ENCODE measurements at regions of chr12 and their contacts with region 1.

Region 1: GRCh38 chr12:71685914-71686665 is at the start of gene TMEM19:
- DNase-seq: peak; percentile 91
- ATAC-seq: peak; percentile 94
- H3K4me3 ChIP-seq: peak within 1 kb of the TSS; percentile 69
- H3K27ac ChIP-seq: peak within 1 kb of the TSS; percentile 67
- H3K4me1 ChIP-seq: peaks cover 25% of the 10 kb centered on the region
- H3K27me3 ChIP-seq: no peaks in the 10 kb centered on the region
- CTCF ChIP-seq: peak; percentile 43
- total RNA-seq, gene TMEM19: 14.3 and 17.5 TPM in 2 replicates

Region 2: GRCh38 chr12:71663561-71664294 is 22.4 kb before region 1 on chr12 and contains the start of gene ZFC3H1:
- CTCF ChIA-PET with region 1: interaction called, 5 read pairs
- POLR2A ChIA-PET with region 1: interaction called, 8 read pairs
- intact Hi-C with region 1: loop called (anchors 2 kb)
- DNase-seq: peak; percentile 99
- ATAC-seq: peak; percentile 87
- H3K4me3 ChIP-seq: peak within 1 kb of the TSS; percentile 95
- H3K27ac ChIP-seq: peak within 1 kb of the TSS; percentile 87
- H3K4me1 ChIP-seq: peaks cover 18% of the 10 kb centered on the region
- H3K27me3 ChIP-seq: no peaks in the 10 kb centered on the region
- CTCF ChIP-seq: peak; percentile 48
- total RNA-seq, gene ZFC3H1: 13.7 and 18.5 TPM in 2 replicates

Region 3: DNA sequence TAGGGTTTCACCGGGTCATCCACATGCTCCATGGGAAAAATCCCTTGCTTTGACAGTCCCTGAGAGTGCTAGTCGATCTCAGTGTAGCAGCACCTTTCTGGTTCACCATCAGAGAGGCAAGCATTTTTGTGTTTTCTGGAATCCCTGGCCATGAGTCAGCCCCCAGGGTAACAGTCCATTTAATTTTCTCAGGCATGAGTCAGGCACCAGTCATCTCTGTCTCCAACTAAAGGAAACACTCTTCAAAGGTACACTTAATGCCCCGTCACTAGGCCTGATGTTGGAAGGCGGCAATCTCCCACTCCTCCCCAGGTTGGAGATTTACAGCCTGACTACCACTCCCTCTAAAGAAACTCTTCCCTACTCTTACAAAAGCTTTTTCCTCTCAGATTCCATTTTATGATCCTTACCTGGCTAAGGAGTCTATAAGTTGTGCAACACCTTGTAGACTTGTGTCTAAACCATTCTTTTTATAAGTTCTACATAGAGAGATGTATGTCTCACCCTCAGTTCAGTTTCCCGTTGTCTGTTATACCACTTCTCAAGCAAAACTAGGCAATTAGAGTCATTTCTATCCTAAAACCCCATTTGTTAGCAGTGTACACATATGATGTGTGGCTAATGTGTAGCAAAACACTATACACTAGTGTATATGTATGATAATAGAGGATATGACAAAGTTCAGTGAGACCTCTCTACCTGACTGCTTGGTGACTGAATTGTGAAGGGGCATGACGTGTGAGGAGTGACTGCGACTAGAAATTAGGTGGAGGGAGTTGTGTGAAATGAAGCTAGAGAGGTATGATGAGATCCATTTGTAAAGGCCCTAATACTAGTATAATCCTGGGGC is 24.4 kb after region 1 on chr12:
- CTCF ChIA-PET with region 1: no interaction called
- POLR2A ChIA-PET with region 1: no interaction called
- intact Hi-C with region 1: loop called (anchors 1 kb)
- DNase-seq: peak; percentile 96
- ATAC-seq: peak; percentile 98
- H3K4me3 ChIP-seq: peak overlapping the region; percentile 18
- H3K27ac ChIP-seq: peak overlapping the region; percentile 83
- H3K4me1 ChIP-seq: peaks cover 24% of the 10 kb centered on the region
- H3K27me3 ChIP-seq: no peaks in the 10 kb centered on the region
- CTCF ChIP-seq: no peak

Measured in PC-3 (cell line).